ENCODE measurements at regions of chr5 and their contacts with region 1.

Region 1: GRCh38 chr5:157148734-157149615 is 6.3 kb upstream of the MED7 start:
- DNase-seq: peak; percentile 78
- H3K4me3 ChIP-seq: no peak overlapping the region
- H3K27ac ChIP-seq: no peak overlapping the region
- H3K4me1 ChIP-seq: no peaks in the 10 kb centered on the region
- CTCF ChIP-seq: peak; percentile 98

Region 2: GRCh38 chr5:157312492-157312891 is 163.5 kb after region 1 on chr5:
- CTCF ChIA-PET with region 1: no interaction called
- POLR2A ChIA-PET with region 1: no interaction called
- intact Hi-C with region 1: loop called (anchors 2 kb)
- DNase-seq: peak; percentile 72
- H3K4me3 ChIP-seq: no peak overlapping the region
- H3K27ac ChIP-seq: no peak overlapping the region
- H3K4me1 ChIP-seq: peaks cover 3% of the 10 kb centered on the region
- CTCF ChIP-seq: peak; percentile 87

Region 3: GRCh38 chr5:157328277-157328912 is 179.4 kb after region 1 on chr5:
- CTCF ChIA-PET with region 1: no interaction called
- POLR2A ChIA-PET with region 1: no interaction called
- intact Hi-C with region 1: loop called (anchors 5 kb)
- DNase-seq: peak; percentile 73
- H3K4me3 ChIP-seq: no peak overlapping the region
- H3K27ac ChIP-seq: no peak overlapping the region
- H3K4me1 ChIP-seq: no peaks in the 10 kb centered on the region
- CTCF ChIP-seq: peak; percentile 88